Psoas muscle (tissue), 8 donors: ENCODE measurements at regions of chr2 and their contacts with region 1.

Region 1: DNA sequence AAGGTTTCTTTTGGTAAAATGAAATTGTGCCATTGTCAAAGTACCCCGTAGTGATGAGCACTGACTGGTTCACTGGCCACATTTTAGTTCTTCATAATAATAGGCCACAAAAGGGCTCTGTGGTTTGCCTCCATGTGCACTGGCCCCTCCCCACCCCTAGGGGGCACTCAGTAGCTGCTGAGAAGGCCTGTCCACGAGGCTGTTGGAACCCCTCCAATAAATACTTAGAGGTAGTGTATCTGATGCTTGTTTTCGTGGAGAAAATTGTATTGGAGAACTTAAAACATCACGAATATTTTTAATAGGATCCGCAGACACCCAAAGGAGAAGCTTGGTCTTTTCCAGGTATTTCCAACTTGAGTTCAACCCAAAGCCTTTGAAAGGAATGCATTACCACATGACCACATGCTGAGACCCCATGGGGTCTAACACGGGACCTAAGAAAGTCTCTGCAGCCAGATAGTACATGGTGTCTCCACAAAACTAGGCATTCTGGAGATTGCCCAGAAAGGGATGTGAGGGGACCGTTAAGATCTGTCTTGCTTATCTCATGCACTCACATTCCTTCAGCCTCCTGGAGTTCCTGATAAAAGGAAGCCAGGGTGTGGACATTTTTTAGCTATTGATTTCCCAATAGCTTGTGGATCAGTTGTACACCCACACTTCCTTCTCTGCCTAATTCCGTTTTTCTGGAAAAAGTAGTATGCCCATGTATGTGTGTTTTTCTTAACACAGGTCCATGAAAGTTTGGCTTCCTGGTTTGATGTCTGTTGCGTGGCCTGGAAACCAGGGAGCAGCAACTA is 28.5 kb upstream of the NOSTRIN start:
- DNase-seq: peak; percentile 31 to 59
- ATAC-seq: peak; percentile 58 to 85 (median 76)
- H3K4me3 ChIP-seq: no peak overlapping the region
- H3K27ac ChIP-seq: no peak overlapping the region
- H3K4me1 ChIP-seq: no peaks in the 10 kb centered on the region
- H3K27me3 ChIP-seq: no peaks in the 10 kb centered on the region
- CTCF ChIP-seq: peak; percentile 88

Region 2: GRCh38 chr2:168849610-168850009 is 75.7 kb after region 1 on chr2:
- intact Hi-C with region 1: loop called in 1 of 2 experiments (anchors 5 kb)
- DNase-seq: peak in 1 of 2 donors; percentile 48
- ATAC-seq: peak in 1 of 4 donors; percentile 47
- H3K4me3 ChIP-seq: no peak overlapping the region
- H3K27ac ChIP-seq: no peak overlapping the region
- H3K4me1 ChIP-seq: peaks cover 16% of the 10 kb centered on the region
- H3K27me3 ChIP-seq: no peaks in the 10 kb centered on the region
- CTCF ChIP-seq: no peak

Region 3: DNA sequence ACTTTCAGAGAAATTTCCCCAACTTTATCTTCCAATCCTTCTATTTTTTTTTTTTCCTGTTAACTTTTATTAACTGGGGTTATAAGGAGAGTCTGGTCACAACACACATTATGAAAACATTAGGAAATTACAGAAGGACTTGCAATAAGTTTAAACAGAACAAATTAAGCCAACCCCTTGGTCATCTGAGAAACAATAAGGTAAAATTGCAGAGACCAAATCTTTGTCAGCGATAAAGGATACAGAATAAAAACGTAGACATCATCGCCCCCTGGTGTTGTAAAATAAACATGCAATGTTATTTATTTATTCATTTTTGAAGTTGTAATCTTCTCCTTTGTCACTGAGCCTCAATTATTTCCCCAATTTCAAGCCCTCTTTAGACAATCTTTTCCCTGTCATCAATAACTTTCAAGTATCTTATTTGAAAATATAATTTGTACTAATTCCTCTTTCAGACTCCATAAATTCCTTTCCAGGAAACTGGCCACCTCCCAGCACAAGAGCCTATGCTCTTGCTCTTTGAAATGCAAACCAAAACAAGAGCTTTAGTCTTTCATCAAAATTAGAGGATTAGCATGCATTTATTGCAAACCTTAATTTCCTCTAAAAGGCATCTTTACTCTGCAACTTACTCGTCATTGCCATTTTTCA is 146.7 kb after region 1 on chr2:
- intact Hi-C with region 1: loop called (anchors 1 to 2 kb)
- DNase-seq: no peak
- ATAC-seq: peak in 2 of 4 donors; percentile 49 to 64
- H3K4me3 ChIP-seq: no peak overlapping the region
- H3K27ac ChIP-seq: no peak overlapping the region
- H3K4me1 ChIP-seq: no peaks in the 10 kb centered on the region
- H3K27me3 ChIP-seq: no peaks in the 10 kb centered on the region
- CTCF ChIP-seq: peak; percentile 72

Region 4: DNA sequence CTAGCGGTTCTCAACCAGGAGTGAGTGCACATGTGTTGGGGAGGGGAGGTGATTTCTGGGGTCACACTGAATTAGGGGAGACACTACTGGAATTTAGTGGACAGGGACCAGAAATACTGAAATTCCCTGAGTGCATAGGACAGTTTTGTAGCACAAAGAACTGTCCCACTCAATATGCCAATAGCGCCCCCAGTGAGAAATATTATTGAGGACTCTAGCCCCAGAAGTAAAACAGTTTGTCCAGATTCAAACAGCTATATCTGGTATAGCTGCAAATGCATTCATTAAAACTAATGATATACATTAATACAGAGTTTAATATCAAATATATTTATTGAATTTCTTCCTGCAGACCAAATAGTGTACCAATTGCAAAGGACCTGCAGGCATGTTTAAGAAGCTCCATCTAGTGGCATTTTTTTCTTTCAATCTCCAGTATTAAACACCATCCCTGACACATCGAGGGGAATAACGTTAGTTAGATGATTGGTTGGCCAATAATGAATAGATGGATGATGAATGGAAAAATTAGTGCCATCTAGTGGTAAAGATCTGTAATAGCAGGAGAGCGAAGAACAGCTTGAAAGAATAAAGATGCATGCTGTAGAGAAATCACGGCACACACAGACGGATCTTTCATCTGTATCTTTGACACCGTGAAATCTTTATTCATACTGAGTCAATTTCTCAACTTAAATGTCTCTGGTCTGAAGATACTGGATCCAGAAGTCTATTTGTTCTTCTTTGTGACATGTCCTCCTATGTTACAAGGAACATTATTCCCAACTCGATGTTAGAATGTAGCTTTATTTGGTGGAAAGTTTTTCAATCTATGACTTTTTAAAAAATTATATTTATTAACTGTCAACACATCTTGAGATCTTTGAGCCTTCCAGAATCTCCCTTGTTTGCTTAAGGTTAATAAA is 357.9 kb after region 1 on chr2:
- intact Hi-C with region 1: loop called in 1 of 2 experiments (anchors 5 kb)
- DNase-seq: no peak
- ATAC-seq: peak in 2 of 4 donors; percentile 48
- H3K4me3 ChIP-seq: no peak overlapping the region
- H3K27ac ChIP-seq: no peak overlapping the region
- H3K4me1 ChIP-seq: no peaks in the 10 kb centered on the region
- H3K27me3 ChIP-seq: no peaks in the 10 kb centered on the region
- CTCF ChIP-seq: peak; percentile 84